WTC11 (cell line): ENCODE measurements at regions of chrX and their contacts with region 1.

Region 1: GRCh38 chrX:86369847-86370630 is 221.8 kb downstream of the DACH2 start:
- DNase-seq: no peak
- ATAC-seq: no peak
- H3K4me3 Mint-ChIP-seq: no peak overlapping the region
- H3K27ac Mint-ChIP-seq: no peak overlapping the region
- H3K4me1 Mint-ChIP-seq: no peaks in the 10 kb centered on the region
- H3K27me3 Mint-ChIP-seq: no peaks in the 10 kb centered on the region
- CTCF ChIP-seq: no peak

Region 2: DNA sequence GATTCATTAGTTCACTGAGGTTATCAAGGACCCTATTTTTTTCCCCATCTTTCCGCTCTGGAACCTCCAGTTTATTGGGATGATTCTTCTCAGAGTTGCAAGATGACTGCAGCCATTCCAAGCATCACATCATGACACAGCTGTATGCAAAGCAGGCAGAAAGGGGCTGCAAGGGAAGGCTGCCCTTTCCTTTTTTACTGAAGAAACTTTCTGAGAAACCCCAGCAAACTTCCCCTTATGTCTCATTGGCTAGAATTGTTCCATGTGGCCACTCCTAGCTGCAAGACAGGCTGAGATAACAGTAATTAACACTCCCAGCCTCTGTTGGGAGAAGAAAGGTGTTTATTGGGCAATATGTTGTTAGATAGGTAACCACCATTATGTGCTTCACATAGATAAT is 1229.1 kb before region 1 on chrX:
- CTCF ChIA-PET with region 1: no interaction called
- POLR2A ChIA-PET with region 1: interaction called, 10 read pairs
- DNase-seq: no peak
- ATAC-seq: no peak
- H3K4me3 Mint-ChIP-seq: no peak overlapping the region
- H3K27ac Mint-ChIP-seq: no peak overlapping the region
- H3K4me1 Mint-ChIP-seq: no peaks in the 10 kb centered on the region
- H3K27me3 Mint-ChIP-seq: no peaks in the 10 kb centered on the region
- CTCF ChIP-seq: no peak